Activated B cell treated with CpG ODN at 0.5 μM for 24 hours (primary cell): ENCODE measurements at regions of chr6 and their contacts with region 1.

Region 1: DNA sequence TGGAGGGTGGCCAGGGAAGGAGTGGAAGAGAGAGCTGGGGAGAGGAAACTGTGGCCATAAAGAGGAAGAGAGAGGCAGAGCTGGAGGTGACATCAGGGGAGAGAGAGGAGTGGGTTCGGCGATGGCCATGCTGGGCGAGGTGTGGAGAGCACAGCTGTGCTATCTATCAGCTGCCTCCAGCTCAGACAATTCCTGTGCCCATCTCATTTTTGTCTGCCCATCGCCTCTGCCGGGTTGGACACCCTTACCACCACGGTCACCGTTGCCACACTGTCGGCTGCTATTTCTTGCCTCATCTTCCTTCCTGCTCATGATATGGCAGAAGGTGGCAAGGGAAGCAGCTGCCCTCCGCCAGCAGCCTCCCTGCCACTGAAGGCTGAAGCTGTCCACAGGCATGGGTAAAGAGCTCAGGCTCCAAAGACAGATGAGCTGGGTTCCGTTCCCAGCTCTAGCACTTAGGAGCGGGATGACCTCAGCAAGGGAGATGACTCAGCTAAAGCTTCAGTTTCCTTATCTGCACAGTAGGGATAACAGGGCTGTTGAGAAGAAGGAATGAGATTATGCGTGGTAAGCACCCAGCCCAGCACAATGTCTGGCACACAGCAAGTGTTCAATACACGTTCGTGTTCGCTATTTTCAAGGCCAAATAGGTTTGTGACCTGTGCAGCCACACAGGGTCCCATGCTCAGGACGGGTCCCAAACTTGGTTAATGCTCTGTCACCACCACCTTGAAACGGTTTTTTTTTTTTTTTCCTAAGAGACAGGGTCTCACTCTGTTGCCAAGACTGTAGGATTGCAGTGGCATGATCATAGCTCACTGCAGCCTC is 21.9 kb upstream of the TAF8 start:
- DNase-seq: no peak
- ATAC-seq: no peak
- H3K4me3 Mint-ChIP-seq: peak overlapping the region; percentile 44
- H3K27ac Mint-ChIP-seq: peak overlapping the region; percentile 99
- H3K4me1 Mint-ChIP-seq: peaks cover 87% of the 10 kb centered on the region
- H3K27me3 Mint-ChIP-seq: no peaks in the 10 kb centered on the region
- CTCF ChIP-seq: no peak

Region 2: GRCh38 chr6:41602864-41603608 is 425.4 kb before region 1 on chr6:
- CTCF ChIA-PET with region 1: no interaction called
- POLR2A ChIA-PET with region 1: no interaction called
- intact Hi-C with region 1: no loop called
- DNase-seq: peak; percentile 55
- ATAC-seq: peak; percentile 85
- H3K4me3 Mint-ChIP-seq: peak overlapping the region; percentile 46
- H3K27ac Mint-ChIP-seq: no peak overlapping the region
- H3K4me1 Mint-ChIP-seq: peaks cover 10% of the 10 kb centered on the region
- H3K27me3 Mint-ChIP-seq: no peaks in the 10 kb centered on the region
- CTCF ChIP-seq: no peak

Region 3: DNA sequence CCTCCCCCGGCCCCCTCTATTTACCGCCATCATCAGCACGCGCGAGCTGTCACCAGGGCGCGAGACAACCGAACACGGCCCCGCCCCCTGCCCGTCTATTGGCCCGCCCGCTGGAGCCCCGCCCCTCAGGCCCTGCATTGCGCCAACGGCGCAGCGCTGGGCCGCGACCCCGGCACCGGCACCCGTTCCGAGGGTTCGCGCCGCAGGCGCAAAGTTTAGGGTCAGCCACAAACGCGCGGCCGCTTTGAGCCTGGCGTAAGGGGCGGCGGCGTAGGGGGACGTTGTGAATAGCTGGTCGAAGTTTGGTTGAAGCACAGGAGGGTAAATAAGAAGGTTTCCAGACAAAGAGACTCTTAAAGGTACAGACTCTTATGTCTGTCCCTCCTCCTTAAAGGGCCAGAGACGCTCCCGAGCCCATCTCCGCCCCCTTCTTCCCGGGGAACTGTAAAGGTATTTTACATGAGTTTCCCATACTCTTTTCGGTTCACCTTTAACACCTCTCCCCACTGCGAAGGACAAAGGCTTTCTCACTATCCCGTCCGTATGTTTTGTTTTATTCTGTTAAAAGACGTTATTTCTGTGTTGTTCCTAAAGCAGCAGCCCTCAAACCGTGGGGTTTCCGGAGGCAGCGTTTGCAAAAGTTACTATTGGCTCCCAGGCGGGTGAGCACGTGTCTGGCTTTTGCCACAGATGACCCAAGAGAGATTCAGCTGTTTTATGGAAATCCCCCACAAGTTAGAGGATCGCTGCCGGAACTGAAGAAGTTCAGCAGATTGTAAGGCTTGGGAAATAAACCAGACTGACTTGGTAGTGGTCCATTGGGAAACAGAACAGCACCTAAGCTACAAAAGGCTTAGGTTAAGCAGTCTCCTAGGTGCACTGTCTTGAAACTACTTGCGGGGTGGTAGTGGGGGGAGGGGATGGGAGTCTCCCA is 132.9 kb before region 1 on chr6 and contains the start of gene USP49:
- CTCF ChIA-PET with region 1: no interaction called
- POLR2A ChIA-PET with region 1: interaction called, 8 read pairs
- intact Hi-C with region 1: loop called (anchors 5 kb)
- DNase-seq: peak; percentile 90
- ATAC-seq: peak; percentile 92
- H3K4me3 Mint-ChIP-seq: no peak within 1 kb of the TSS
- H3K27ac Mint-ChIP-seq: peak within 1 kb of the TSS; percentile 95
- H3K4me1 Mint-ChIP-seq: peaks cover 14% of the 10 kb centered on the region
- H3K27me3 Mint-ChIP-seq: no peaks in the 10 kb centered on the region
- CTCF ChIP-seq: no peak
- total RNA-seq, gene USP49: 7.7 and 8.0 TPM in 2 replicates